ENCODE measurements at regions of chr16 and their contacts with region 1.

Region 1: DNA sequence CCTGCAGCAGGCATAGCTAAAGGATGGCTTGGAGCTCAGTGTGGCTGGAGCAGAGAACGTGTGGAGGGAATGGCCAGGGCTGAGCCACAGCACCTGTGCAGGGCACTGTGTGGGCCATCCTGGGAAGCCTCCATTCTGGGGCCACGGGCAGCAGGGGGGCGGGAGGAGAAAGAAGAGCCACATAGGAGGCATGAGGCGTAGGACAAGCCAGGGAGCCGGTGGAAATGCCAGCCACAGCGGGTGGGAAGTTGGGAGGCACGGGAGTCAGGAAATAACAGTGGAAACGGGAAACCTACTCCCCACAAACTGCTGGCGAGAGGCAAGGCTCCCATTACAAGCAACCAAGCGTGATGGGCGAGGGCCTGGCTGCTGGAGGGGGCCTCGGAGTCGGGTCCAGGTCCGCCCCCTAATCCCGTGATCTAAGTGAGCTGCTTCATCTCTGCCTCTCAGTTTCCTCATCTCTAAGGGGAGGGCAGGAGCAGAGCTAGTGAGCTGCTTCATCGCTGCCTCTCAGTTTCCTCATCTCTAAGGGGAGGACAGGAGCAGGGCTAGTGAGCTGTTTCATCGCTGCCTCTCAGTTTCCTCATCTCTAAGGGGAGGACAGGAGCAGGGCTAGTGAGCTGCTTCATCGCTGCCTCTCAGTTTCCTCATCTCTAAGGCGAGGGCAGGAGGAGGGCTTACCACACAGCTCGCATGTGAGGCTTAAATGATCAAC is 104.9 kb downstream of the ADCY9 start:
- DNase-seq: peak; percentile 65
- H3K4me3 ChIP-seq: no peak overlapping the region
- H3K27ac ChIP-seq: peak overlapping the region; percentile 19
- H3K4me1 ChIP-seq: peaks cover 32% of the 10 kb centered on the region
- H3K27me3 ChIP-seq: no peaks in the 10 kb centered on the region
- CTCF ChIP-seq: no peak
- POLR2A ChIP-seq: no peak

Region 2: GRCh38 chr16:3971261-3971660 is 40.1 kb before region 1 on chr16:
- CTCF ChIA-PET with region 1: no interaction called
- POLR2A ChIA-PET with region 1: no interaction called
- dilution Hi-C with region 1: no loop called
- intact Hi-C with region 1: no loop called
- DNase-seq: no peak
- H3K4me3 ChIP-seq: no peak overlapping the region
- H3K27ac ChIP-seq: no peak overlapping the region
- H3K4me1 ChIP-seq: no peaks in the 10 kb centered on the region
- H3K27me3 ChIP-seq: no peaks in the 10 kb centered on the region
- CTCF ChIP-seq: no peak
- POLR2A ChIP-seq: no peak

Region 3: DNA sequence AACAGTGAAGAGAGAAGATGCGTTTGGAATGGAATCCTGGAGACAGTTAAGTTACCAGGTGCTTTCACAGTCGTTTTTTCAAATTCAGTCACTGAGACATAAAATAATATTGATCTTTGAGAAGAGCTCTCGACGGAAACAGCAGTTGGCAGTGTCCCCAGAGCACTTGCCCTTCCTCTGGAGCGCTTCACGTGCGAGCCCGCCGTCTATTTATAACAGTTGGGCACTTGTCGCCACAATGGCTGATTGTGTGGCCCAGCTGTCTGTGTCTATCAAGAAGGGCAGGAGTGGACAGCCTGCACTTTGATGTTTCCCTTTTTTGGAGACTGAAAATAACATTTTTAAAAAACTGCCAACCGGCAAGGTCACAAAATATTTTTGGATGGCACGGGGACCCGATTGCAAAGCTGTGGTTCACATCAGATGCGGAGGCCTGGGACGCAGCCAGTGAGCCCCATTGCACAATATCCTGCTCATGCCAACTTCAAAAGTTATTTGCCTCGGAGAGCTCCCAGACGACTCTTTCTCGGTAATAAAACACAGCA is 42.0 kb after region 1 on chr16:
- CTCF ChIA-PET with region 1: no interaction called
- POLR2A ChIA-PET with region 1: no interaction called
- dilution Hi-C with region 1: no loop called
- intact Hi-C with region 1: loop called (anchors 5 kb)
- DNase-seq: peak; percentile 31
- H3K4me3 ChIP-seq: no peak overlapping the region
- H3K27ac ChIP-seq: peak overlapping the region; percentile 46
- H3K4me1 ChIP-seq: peaks cover 17% of the 10 kb centered on the region
- H3K27me3 ChIP-seq: no peaks in the 10 kb centered on the region
- CTCF ChIP-seq: no peak
- POLR2A ChIP-seq: no peak